ENCODE measurements at regions of chr11 and their contacts with region 1.

Region 1: GRCh38 chr11:62315431-62315830 is 16.6 kb upstream of the SCGB1D4 start:
- DNase-seq: no peak
- H3K4me3 ChIP-seq: no peak overlapping the region
- H3K27ac ChIP-seq: no peak overlapping the region
- H3K4me1 ChIP-seq: peaks cover 0 to 15% (median 12%) of the 10 kb centered on the region in 6 donors
- H3K27me3 ChIP-seq: peaks cover 0 to 44% (median 0%) of the 10 kb centered on the region in 7 donors
- CTCF ChIP-seq: no peak
- POLR2A ChIP-seq: no peak

Region 2: DNA sequence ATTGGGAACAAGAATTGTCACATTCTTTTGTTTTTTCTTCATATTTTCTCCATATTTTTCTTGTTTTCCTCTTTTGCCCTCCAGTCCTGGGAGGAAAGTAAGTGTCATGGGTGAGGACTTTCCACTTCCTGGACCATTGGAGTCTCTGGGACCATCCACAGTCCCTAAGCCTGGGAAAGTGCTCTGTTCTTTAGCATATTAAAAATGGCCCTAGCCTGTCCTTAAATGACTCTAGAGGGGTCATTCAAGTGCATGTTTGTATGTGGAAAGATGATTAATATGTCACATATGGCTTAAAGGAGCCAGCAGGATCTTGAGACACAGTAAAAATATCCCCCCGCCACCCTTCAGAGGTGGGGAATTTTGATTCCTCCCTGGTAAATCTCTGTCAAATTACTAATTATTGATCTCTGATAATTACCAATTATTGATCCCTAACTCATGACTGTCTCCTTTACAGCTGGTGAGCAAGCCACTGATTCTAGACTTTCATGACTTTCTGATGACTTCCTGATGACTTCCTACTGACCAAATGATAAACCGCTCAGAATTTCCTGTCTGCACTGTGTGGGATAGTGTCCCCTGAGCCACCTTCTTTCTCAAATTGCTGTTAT is 145.4 kb before region 1 on chr11:
- intact Hi-C with region 1: loop called (anchors 10 kb)
- DNase-seq: no peak
- H3K4me3 ChIP-seq: no peak overlapping the region
- H3K27ac ChIP-seq: peak overlapping the region in 6 of 8 donors; percentile 5 to 52 (median 30)
- H3K4me1 ChIP-seq: peaks cover 0 to 17% (median 5%) of the 10 kb centered on the region in 6 donors
- H3K27me3 ChIP-seq: peaks cover 0 to 69% (median 6%) of the 10 kb centered on the region in 7 donors
- CTCF ChIP-seq: no peak
- POLR2A ChIP-seq: no peak

Region 3: DNA sequence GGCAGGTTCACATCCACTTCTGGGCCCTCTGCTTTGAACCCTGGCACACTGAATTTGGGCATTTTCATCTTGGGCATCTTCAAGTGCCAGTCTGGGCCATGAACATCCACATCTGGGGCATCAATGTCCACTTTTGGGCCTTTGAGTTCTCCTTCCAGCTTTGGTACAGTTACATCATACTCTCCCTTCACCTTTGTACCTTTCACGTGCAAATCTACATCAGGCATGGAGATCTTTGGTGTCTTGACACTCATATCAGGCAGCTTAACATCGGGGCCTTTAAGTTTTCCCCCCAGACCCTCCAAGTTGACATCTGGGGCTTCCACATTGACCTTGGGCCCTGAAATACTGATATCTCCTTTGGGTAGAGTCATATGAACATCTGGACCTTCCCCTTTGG is 216.7 kb after region 1 on chr11:
- intact Hi-C with region 1: no loop called
- DNase-seq: no peak
- H3K4me3 ChIP-seq: no peak overlapping the region
- H3K27ac ChIP-seq: no peak overlapping the region
- H3K4me1 ChIP-seq: peaks cover 0 to 13% (median 7%) of the 10 kb centered on the region in 6 donors
- H3K27me3 ChIP-seq: no peaks in the 10 kb centered on the region
- CTCF ChIP-seq: no peak
- POLR2A ChIP-seq: no peak

Measured in spleen (tissue), 13 donors.